Mucosa of descending colon (tissue), 3 donors: ENCODE measurements at regions of chr9 and their contacts with region 1.

Region 1: GRCh38 chr9:107484117-107484723 is 5.3 kb downstream of the KLF4 start:
- DNase-seq: peak in 1 of 3 donors; percentile 73
- ATAC-seq: no peak
- H3K4me3 ChIP-seq: no peak overlapping the region
- H3K4me1 ChIP-seq: no peaks in the 10 kb centered on the region
- CTCF ChIP-seq: no peak

Region 2: GRCh38 chr9:108565651-108566378 is 1081.6 kb after region 1 on chr9:
- intact Hi-C with region 1: loop called in 1 of 2 experiments (anchors 5 kb)
- DNase-seq: peak in 2 of 3 donors; percentile 40 to 80
- ATAC-seq: peak; percentile 96
- H3K4me3 ChIP-seq: no peak overlapping the region
- H3K4me1 ChIP-seq: no peaks in the 10 kb centered on the region
- CTCF ChIP-seq: peak; percentile 76